Activated naive CD8-positive, alpha-beta T cell treated with anti-CD3 and anti-CD28 coated beads, Interleukin-2, amount 10 ng/mL, durations not matched to agents 7 days and 5 days (primary cell): ENCODE measurements at regions of chr1 and their contacts with region 1.

Region 1: DNA sequence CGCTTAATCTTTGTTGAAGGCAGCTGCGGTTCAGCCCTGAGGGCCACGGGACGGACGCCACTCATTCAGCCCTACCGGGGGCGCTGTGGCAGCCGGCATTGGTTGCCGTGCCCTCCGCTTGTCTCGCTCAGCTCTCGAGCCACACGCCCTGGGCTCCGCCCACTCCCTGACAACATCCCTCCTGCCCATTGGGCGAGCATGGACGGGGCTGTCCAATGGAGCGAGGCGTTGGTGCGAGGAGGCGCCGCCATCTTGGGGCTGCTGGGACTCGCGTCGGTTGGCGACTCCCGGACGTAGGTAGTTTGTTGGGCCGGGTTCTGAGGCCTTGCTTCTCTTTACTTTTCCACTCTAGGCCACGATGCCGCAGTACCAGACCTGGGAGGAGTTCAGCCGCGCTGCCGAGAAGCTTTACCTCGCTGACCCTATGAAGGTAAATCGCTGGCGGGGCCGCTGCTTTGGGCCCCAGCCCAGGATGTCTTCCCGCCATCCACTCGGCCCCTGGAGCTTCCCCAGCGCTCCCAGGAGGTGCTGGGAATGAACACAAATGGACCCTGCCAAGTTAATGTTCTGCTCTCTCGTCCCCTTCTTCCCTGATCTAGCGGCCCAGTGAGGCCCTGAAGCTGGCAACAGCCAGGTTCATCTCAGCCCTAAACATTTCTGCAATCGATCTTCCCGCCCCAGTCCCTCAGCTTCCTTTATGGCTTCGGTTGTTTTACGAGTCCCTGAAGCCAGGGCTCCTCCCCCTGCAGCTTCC is at the start of gene SRP9:
- DNase-seq: peak; percentile 98
- ATAC-seq: peak; percentile 97
- H3K4me3 Mint-ChIP-seq: no peak within 1 kb of the TSS
- H3K27ac Mint-ChIP-seq: no peak within 1 kb of the TSS
- H3K4me1 Mint-ChIP-seq: peaks cover 20% of the 10 kb centered on the region
- H3K27me3 Mint-ChIP-seq: no peaks in the 10 kb centered on the region
- total RNA-seq, gene SRP9: 209 to 226 TPM

Region 2: DNA sequence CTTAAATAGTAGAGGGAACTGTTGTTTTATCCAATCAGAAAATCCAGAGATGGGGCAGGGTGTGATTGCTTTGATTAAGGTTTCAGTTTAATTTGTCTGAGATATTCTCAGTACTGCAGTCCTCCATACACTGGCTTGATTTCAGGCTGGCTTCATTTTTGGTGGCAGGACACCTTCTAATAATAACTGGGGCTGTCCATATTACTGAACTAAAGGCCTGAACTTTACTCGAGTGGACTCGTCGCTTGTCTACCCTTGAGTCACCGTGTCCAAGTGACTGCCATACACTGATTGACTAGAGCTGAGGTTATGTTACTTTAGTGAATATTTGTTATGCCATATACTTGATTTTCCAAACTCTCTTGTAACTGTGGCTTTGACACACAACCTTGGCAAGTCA is 619.5 kb before region 1 on chr1:
- POLR2A ChIA-PET with region 1: no interaction called
- DNase-seq: no peak
- ATAC-seq: no peak
- H3K4me3 Mint-ChIP-seq: no peak overlapping the region
- H3K27ac Mint-ChIP-seq: no peak overlapping the region
- H3K4me1 Mint-ChIP-seq: peaks cover 7% of the 10 kb centered on the region
- H3K27me3 Mint-ChIP-seq: peaks cover 15% of the 10 kb centered on the region

Region 3: GRCh38 chr1:225476538-225476988 is 301.2 kb before region 1 on chr1:
- POLR2A ChIA-PET with region 1: interaction called, 14 read pairs
- DNase-seq: no peak
- ATAC-seq: peak; percentile 28
- H3K4me3 Mint-ChIP-seq: peak overlapping the region; percentile 47
- H3K27ac Mint-ChIP-seq: peak overlapping the region; percentile 81
- H3K4me1 Mint-ChIP-seq: peaks cover 40% of the 10 kb centered on the region
- H3K27me3 Mint-ChIP-seq: peaks cover 3% of the 10 kb centered on the region

Region 4: DNA sequence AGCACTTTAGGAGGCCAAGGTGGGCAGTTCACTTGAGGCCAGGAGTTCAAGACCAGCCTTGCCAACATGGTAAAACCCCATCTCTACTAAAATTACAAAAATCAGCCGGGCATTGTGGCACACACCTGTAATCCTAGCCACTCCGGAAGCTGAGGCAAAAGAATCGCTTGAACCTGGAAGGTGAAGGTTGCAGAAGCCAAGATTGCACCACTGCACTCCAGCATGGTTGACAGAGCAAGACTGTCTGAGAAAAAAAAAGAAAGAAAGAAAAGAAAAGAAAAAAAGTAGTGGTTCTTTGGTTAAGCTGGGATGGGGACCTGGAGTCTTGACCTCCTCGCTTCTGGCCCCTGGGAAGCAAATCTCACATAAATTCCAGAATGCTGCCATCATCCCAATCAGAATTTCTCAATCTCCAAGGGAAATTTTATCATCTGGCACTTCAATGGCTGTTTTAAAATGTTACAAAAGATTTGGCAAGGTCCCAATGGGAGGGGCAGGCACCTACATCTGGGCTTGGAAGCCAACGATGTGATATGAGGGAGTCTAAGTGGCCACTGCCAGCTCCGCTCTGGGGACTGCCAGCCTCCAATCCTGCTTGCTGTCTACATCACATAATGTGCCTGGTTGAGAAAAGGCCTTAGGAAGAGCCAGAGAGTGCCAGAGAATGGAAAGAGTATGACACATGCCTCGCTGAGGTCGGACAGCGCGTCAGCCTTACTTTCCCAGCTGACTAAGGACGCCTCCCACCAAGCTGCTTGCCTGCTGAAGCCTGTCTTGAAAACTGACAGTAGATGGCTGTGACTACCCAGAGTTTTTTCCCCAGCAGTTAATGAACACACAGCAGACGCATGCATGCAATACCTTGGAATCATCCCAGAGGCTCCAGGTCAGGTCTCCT is 42.3 kb before region 1 on chr1:
- POLR2A ChIA-PET with region 1: no interaction called
- DNase-seq: no peak
- ATAC-seq: no peak
- H3K4me3 Mint-ChIP-seq: no peak overlapping the region
- H3K27ac Mint-ChIP-seq: no peak overlapping the region
- H3K4me1 Mint-ChIP-seq: no peaks in the 10 kb centered on the region
- H3K27me3 Mint-ChIP-seq: peaks cover 7% of the 10 kb centered on the region

Region 5: DNA sequence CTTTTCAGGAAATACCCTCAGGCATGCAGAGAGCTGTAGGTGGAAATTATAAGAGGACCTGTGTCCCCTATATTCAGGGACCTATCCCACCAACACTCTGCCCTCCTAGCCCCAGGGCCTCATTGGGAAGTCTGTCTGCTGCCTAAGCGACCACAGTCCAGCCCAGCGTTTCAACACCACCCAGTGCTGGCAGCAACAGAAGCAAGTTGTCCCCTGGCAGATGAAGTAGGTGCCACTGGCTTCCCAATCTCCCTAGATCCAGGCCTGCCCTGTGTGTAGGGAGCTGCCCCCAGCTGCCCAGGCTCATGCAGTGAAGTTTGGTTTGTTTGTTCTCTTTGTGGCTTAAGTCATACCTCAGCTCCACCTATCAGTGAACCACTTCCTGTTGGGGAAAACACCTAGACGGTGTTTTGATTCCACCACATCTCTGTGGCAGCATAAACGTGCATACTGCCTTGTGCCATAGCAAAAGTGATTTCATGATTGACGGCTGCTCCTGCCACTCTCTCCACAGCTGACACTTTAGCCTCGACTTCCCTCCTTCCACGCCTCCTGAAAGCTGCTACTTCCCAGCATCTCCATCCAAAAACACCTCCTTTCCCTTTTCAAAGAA is 119.3 kb after region 1 on chr1:
- POLR2A ChIA-PET with region 1: interaction called, 14 read pairs
- DNase-seq: peak; percentile 62
- ATAC-seq: peak; percentile 94
- H3K4me3 Mint-ChIP-seq: peak overlapping the region; percentile 55
- H3K27ac Mint-ChIP-seq: peak overlapping the region; percentile 54
- H3K4me1 Mint-ChIP-seq: peaks cover 23% of the 10 kb centered on the region
- H3K27me3 Mint-ChIP-seq: peaks cover 21% of the 10 kb centered on the region

Region 6: GRCh38 chr1:225911191-225912130 is 133.7 kb after region 1 on chr1:
- POLR2A ChIA-PET with region 1: interaction called, 13 read pairs
- DNase-seq: peak; percentile 88
- ATAC-seq: peak; percentile 89
- H3K4me3 Mint-ChIP-seq: no peak overlapping the region
- H3K27ac Mint-ChIP-seq: no peak overlapping the region
- H3K4me1 Mint-ChIP-seq: peaks cover 9% of the 10 kb centered on the region
- H3K27me3 Mint-ChIP-seq: peaks cover 5% of the 10 kb centered on the region

Region 7: DNA sequence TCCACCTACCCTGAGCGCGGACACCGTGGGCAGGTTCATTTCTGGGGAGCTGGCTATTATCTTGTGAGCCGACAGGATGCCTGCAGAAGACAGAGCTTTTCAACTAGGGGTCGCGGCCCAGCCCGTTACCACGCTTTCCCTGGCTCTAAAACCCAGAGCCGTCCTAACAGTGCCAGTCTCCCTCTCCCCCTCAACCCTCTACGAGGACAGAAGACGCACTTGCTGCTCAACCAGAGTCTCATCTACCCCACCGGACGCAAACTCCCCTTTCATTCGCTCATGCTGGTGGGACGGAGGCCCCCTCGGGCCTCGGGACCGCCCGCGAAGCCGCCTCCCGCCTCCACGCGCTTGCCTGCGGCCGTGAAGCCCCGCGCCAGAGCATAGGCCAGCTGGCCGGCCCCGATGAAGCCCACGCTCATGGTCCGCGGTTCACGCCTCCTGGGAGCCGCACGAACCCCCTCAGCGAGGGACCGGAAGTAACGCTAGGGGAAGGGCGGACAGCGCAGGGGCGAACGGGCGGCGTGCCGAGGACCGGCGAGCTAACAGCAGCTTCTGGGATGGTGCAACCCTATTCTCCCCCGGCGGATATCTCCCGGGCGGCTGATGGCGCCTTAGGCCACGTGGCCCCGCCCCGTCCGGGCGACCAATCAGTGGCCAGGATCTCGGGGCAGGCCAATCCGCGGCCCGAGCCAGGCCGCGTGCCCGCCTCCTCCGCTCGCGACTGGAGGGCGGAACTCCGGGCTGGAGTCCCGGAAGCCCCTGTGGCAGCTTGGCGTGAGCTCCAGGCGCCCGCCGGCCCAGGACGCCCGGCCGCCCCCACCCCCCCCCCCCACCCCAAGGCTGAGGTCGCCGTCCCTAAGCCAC is 146.2 kb after region 1 on chr1 and contains the start of gene PYCR2:
- POLR2A ChIA-PET with region 1: interaction called, 33 read pairs
- DNase-seq: peak; percentile 97
- ATAC-seq: peak; percentile 95
- H3K4me3 Mint-ChIP-seq: peak within 1 kb of the TSS; percentile 96
- H3K27ac Mint-ChIP-seq: peak within 1 kb of the TSS; percentile 95
- H3K4me1 Mint-ChIP-seq: peaks cover 43% of the 10 kb centered on the region
- H3K27me3 Mint-ChIP-seq: no peaks in the 10 kb centered on the region
- total RNA-seq, gene PYCR2: 118 to 125 TPM

Region 8: GRCh38 chr1:225977937-225978748 is 200.4 kb after region 1 on chr1:
- POLR2A ChIA-PET with region 1: no interaction called
- DNase-seq: no peak
- ATAC-seq: no peak
- H3K4me3 Mint-ChIP-seq: no peak overlapping the region
- H3K27ac Mint-ChIP-seq: no peak overlapping the region
- H3K4me1 Mint-ChIP-seq: peaks cover 14% of the 10 kb centered on the region
- H3K27me3 Mint-ChIP-seq: no peaks in the 10 kb centered on the region

Region 9: DNA sequence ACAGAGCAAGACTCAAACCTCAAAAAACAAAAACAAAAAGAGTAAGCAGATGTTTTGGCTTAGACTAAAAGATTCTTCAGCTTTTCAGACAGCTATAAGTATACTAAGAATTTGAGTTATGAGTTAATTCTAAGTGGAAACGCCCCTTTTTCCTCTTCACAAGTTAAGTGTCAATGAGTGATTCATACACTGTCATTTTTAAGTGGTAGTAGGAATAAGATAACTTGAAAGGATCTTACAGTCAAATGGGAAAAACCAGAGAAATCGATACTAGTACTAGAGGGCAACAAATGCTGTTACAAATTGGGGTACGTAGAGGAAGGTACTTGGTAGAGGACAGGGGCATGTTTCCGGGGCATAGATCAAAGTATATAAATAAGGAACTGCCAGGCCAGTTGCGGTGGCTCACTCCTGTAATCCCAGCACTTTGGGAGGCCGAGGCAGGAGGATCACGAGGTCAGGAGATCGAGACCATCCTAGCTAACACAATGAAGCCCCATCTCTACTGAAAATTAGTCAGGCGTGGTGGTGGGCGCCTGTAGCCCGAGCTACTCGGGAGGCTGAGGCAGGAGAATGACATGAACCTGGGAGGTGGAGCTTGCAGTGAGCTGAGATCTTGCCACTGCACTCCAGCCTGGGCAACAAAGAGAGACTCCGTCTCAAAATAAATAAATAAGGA is 292.2 kb after region 1 on chr1:
- POLR2A ChIA-PET with region 1: no interaction called
- DNase-seq: no peak
- ATAC-seq: no peak
- H3K4me3 Mint-ChIP-seq: no peak overlapping the region
- H3K27ac Mint-ChIP-seq: peak overlapping the region; percentile 14
- H3K4me1 Mint-ChIP-seq: peaks cover 30% of the 10 kb centered on the region
- H3K27me3 Mint-ChIP-seq: no peaks in the 10 kb centered on the region